ENCODE measurements at regions of chr5 and their contacts with region 1.

Region 1: GRCh38 chr5:177006265-177006972 is at the start of gene UIMC1:
- DNase-seq: peak; percentile 80 to 85
- ATAC-seq: peak; percentile 90
- H3K4me3 ChIP-seq: peak within 1 kb of the TSS; percentile 68 to 84 (median 80)
- H3K27ac ChIP-seq: peak within 1 kb of the TSS; percentile 89 to 95 (median 92)
- H3K4me1 ChIP-seq: peaks cover 21 to 24% of the 10 kb centered on the region in 2 donors
- H3K27me3 ChIP-seq: no peaks in the 10 kb centered on the region
- CTCF ChIP-seq: peak in 1 of 5 experiments; percentile 9
- POLR2A ChIP-seq: peak; percentile 37 to 64
- total RNA-seq, gene UIMC1: 10.4 to 24.3 (median 20.2) TPM

Region 2: DNA sequence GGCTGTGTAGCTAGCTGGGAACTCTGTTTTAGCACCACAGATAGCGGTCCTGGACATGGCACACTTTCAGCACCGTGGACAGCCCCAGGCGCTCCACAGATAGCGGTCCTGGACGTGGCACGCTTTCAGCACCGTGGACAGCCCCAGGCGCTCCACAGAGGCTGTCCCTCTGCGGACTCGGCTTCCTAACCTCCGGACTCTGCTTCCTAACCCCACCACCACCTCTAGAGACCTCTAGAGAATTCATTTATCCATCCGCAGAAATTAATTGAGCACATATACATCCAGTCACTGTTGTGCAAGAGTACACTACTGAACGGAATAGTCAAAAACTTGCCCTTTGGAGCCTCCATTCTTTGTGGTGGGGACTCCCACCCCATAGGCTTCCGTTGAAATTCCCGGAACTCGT is 168.7 kb before region 1 on chr5:
- in situ Hi-C with region 1: no loop called
- intact Hi-C with region 1: no loop called
- DNase-seq: peak; percentile 48 to 52
- ATAC-seq: no peak
- H3K4me3 ChIP-seq: no peak overlapping the region
- H3K27ac ChIP-seq: no peak overlapping the region
- H3K4me1 ChIP-seq: no peaks in the 10 kb centered on the region
- H3K27me3 ChIP-seq: peaks cover 0 to 18% (median 7%) of the 10 kb centered on the region in 3 donors
- CTCF ChIP-seq: no peak
- POLR2A ChIP-seq: no peak

Region 3: DNA sequence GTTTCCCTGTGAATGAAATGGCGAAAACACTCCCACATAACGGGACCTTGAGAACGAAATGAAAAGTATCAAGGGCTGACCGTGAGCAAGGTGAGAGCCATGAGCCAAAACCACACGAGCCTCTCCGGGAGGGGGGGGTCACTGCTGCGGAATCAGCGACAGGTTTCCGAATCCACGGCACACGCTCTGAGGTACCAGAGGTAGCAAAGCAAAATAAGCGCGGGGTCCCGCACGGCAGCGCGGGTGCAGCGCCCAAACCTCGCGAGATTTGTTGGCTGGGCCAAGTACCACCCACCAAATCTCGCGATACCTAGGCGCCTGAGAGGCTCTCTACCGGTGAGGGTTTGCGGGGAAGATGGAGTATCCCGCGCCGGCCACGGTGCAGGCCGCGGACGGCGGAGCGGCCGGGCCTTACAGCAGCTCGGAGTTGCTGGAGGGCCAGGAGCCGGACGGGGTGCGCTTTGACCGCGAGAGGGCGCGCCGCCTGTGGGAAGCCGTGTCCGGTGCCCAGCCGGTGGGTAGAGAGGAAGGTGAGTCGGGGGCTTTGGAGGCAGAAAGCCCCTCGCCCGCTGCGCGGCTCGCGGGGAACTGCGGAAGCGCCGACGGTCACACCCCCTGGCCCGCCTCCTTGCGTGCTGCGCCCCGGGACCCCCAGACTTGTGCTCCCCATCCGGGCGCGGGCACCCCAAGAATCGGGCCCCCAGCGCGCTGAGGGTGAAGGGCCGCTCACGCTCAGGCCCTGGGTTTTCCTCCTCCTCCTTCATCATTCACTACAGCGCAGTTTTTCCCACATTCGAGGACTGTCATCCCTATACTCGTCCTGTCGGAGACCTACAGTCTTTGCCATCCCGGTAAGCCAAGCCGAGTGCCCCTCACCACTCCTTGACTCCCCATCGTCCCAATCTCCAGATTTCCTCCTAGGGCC is 16.2 kb after region 1 on chr5 and contains the start of gene ZNF346:
- in situ Hi-C with region 1: no loop called
- intact Hi-C with region 1: loop called (anchors 1 kb)
- DNase-seq: peak; percentile 85 to 88
- ATAC-seq: peak; percentile 91 to 92
- H3K4me3 ChIP-seq: peak within 1 kb of the TSS; percentile 67 to 98 (median 88)
- H3K27ac ChIP-seq: peak within 1 kb of the TSS; percentile 78 to 88 (median 86)
- H3K4me1 ChIP-seq: peaks cover 17 to 24% of the 10 kb centered on the region in 2 donors
- H3K27me3 ChIP-seq: no peaks in the 10 kb centered on the region
- CTCF ChIP-seq: peak; percentile 60 to 69 (median 66)
- POLR2A ChIP-seq: peak in 1 of 2 donors; percentile 57
- total RNA-seq, gene ZNF346: 5.2 to 8.0 (median 6.8) TPM

Region 4: GRCh38 chr5:177133091-177133852 is 126.9 kb after region 1 on chr5 and contains the start of gene NSD1:
- in situ Hi-C with region 1: no loop called
- intact Hi-C with region 1: loop called (anchors 10 kb)
- DNase-seq: peak; percentile 76 to 84
- ATAC-seq: peak; percentile 71 to 80
- H3K4me3 ChIP-seq: peak within 1 kb of the TSS; percentile 76 to 93 (median 86)
- H3K27ac ChIP-seq: peak within 1 kb of the TSS; percentile 89 to 92 (median 90)
- H3K4me1 ChIP-seq: peaks cover 35 to 38% of the 10 kb centered on the region in 2 donors
- H3K27me3 ChIP-seq: no peaks in the 10 kb centered on the region
- CTCF ChIP-seq: no peak
- POLR2A ChIP-seq: peak; percentile 70 to 74
- total RNA-seq, gene NSD1: 25.4 to 32.7 (median 29.0) TPM

Region 5: GRCh38 chr5:177412603-177413233 is 406.3 kb after region 1 on chr5:
- in situ Hi-C with region 1: no loop called
- intact Hi-C with region 1: no loop called
- DNase-seq: no peak
- ATAC-seq: no peak
- H3K4me3 ChIP-seq: no peak overlapping the region
- H3K27ac ChIP-seq: no peak overlapping the region
- H3K4me1 ChIP-seq: no peaks in the 10 kb centered on the region
- H3K27me3 ChIP-seq: no peaks in the 10 kb centered on the region
- CTCF ChIP-seq: no peak
- POLR2A ChIP-seq: no peak